Activated T-helper 2 cell treated with anti-CD3 and anti-CD28 coated beads, Interferon-gamma antibody, Interleukin-2, Interleukin-4, amounts not matched to agents 10 μg/mL and 5 μg/mL and 100 μg/mL, durations not matched to agents 14 hours and 24 hours and 36 hours (primary cell): ENCODE measurements at regions of chr2 and their contacts with region 1.

Region 1: GRCh38 chr2:181790716-181791649 is 100.5 kb upstream of the ITPRID2 start:
- DNase-seq: peak; percentile 21
- H3K4me3 Mint-ChIP-seq: peak overlapping the region; percentile 22
- H3K27ac Mint-ChIP-seq: peak overlapping the region; percentile 71
- H3K4me1 Mint-ChIP-seq: peaks cover 34% of the 10 kb centered on the region
- H3K27me3 Mint-ChIP-seq: no peaks in the 10 kb centered on the region

Region 2: DNA sequence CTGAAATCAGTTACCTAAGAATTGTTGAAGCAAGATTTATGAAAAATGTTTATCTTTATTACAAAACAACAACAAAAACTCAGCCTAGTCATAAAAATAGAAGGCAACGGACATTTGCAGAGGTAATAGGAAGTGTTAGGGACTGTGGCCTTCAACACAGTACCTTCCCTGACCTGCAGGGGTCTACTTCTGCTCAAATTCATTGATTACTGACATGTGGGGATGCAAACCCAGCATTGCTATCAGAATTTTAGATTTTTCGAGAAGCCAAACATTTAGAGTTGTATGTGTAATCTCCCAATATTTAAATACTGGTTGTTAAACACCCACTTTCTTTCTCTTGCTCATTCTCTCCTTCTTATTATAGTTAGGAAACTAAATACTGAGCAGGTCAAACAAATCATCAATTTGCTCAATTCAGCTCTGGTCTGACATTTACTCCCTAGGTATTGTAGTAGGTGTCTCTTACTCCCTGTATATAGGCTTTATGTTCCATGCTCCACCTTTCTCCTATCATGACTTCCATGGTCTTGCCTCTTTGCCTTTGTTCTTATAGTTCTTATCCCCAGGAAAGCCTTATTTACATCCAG is 612.1 kb before region 1 on chr2:
- intact Hi-C with region 1: loop called (anchors 10 kb)
- DNase-seq: no peak
- H3K4me3 Mint-ChIP-seq: no peak overlapping the region
- H3K27ac Mint-ChIP-seq: peak overlapping the region; percentile 86
- H3K4me1 Mint-ChIP-seq: peaks cover 53% of the 10 kb centered on the region
- H3K27me3 Mint-ChIP-seq: no peaks in the 10 kb centered on the region

Region 3: GRCh38 chr2:181466661-181467576 is 324.1 kb before region 1 on chr2:
- intact Hi-C with region 1: loop called (anchors 10 kb)
- DNase-seq: peak; percentile 61
- H3K4me3 Mint-ChIP-seq: peak overlapping the region; percentile 34
- H3K27ac Mint-ChIP-seq: peak overlapping the region; percentile 70
- H3K4me1 Mint-ChIP-seq: peaks cover 77% of the 10 kb centered on the region
- H3K27me3 Mint-ChIP-seq: no peaks in the 10 kb centered on the region

Region 4: DNA sequence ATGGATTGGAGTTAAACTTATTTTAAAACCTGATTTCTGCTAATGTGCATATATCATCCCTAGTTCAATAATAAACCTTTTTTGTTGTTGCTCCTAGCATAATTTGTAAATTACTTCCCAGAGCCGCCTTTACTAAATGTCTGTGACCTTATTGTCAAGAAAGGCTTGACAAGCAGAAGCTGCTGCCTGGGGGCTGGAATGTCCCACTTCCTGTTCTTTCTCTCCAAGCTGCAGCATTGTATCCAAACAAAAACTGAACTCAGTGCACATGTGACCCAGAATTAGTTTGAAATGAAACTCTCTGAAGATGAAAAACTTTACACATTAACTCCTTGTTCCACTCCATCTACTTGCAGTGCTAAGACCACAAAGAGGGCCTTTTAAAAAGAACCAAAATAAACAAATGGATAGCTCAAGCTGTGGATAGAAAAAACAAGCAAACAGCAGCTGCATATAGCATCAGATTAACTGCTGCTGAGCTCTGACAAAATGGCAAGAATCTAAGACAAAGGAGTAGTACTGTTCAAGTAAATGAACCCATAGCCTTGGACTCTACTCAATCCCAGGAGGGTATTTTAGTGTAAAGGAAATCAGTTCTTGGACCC is 10.8 kb before region 1 on chr2:
- intact Hi-C with region 1: no loop called
- DNase-seq: no peak
- H3K4me3 Mint-ChIP-seq: no peak overlapping the region
- H3K27ac Mint-ChIP-seq: no peak overlapping the region
- H3K4me1 Mint-ChIP-seq: peaks cover 15% of the 10 kb centered on the region
- H3K27me3 Mint-ChIP-seq: peaks cover 6% of the 10 kb centered on the region

Region 5: DNA sequence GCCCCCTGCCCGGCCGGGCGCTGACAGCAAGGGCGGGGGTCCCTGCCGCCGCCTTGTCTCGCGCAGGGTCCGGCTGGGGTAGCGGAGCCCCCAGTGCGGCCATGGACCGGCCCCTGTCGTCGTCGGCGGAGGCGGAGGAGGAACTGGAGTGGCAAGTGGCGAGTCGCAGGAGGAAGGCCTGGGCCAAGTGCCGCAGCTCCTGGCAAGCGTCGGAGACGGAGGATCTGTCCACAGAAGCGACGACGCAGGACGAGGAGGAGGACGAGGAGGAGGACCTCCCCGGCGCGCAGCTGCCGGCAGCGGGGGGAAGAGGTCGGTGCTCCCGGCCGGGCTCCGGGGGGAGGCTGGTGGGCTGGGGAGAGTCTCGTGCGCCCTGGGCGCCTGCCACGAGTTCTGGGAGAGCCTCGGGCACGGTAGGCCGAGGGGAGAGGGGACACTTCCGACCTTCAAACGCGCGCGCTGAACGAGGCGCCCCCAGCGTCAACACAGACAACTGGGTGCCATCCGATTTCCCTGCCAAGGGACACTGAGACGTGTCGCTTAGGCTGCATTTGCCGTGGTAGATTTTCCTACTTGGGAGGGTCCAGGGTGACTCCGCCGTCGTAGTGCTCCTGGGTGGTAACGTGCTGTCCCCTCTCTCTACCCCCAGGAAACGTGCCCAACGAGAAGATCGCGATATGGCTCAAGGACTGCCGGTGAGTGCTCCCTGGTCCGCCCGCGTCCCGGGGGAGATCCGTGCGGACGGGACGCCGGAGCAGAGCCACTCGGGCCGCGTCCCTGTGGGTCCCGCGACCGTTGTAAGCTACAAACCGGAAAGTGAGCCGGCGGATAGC is 101.2 kb after region 1 on chr2:
- intact Hi-C with region 1: loop called (anchors 1 kb)
- DNase-seq: peak; percentile 61
- H3K4me3 Mint-ChIP-seq: peak overlapping the region; percentile 90
- H3K27ac Mint-ChIP-seq: peak overlapping the region; percentile 90
- H3K4me1 Mint-ChIP-seq: peaks cover 27% of the 10 kb centered on the region
- H3K27me3 Mint-ChIP-seq: peaks cover 19% of the 10 kb centered on the region

Region 6: GRCh38 chr2:181953881-181954537 is 163.0 kb after region 1 on chr2:
- intact Hi-C with region 1: loop called (anchors 2 kb)
- DNase-seq: peak; percentile 46
- H3K4me3 Mint-ChIP-seq: peak overlapping the region; percentile 65
- H3K27ac Mint-ChIP-seq: no peak overlapping the region
- H3K4me1 Mint-ChIP-seq: peaks cover 40% of the 10 kb centered on the region
- H3K27me3 Mint-ChIP-seq: peaks cover 8% of the 10 kb centered on the region

Region 7: GRCh38 chr2:183124222-183124956 is 1333.4 kb after region 1 on chr2 and contains the start of gene NUP35:
- intact Hi-C with region 1: loop called (anchors 10 kb)
- DNase-seq: peak; percentile 74
- H3K4me3 Mint-ChIP-seq: peak within 1 kb of the TSS; percentile 94
- H3K27ac Mint-ChIP-seq: peak within 1 kb of the TSS; percentile 98
- H3K4me1 Mint-ChIP-seq: peaks cover 32% of the 10 kb centered on the region
- H3K27me3 Mint-ChIP-seq: peaks cover 4% of the 10 kb centered on the region
- total RNA-seq, gene NUP35: 30.9 and 39.3 TPM in 2 replicates